Gastrocnemius medialis (tissue), 4 donors: ENCODE measurements at regions of chr1 and their contacts with region 1.

Region 1: DNA sequence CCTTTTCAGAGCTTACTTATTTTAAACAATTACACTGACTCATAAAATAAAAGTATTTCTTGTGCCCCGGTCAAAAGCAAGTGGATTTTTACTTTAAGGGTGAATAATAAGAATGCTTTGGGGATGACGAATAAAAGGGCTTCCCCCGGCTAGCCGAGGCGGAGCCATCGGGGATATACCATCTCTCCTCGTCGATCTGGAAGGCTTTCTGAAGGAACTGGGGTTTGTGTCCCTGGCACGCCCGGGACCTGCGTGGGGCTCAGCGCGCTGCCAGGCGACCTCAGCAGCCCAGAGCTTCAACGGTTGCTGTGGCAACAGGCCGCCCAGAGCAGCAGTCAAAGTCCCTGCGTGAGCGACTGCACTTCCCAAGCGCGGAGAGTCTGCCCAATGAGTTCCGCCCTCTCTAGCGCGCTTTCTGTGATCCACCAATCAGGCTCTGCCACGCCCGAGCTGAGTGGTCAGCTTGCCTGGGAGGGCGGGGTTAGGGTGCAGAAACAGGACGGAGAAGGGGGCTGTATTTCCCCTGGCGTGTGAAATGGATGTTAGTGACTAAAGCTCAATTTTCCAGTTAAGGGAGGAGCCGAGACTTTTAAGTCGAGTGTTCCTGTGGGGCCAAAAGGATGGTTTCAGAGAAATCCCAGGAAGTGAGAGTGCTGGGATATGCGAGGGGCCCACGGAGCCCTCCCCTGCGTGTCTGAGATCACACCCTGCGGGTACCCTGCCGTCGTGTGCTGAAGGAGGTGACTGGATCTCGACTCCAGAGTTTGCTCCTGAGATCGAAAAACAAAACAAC is 33.0 kb upstream of the MGST3 start:
- DNase-seq: peak; percentile 92 to 95
- ATAC-seq: peak; percentile 94 to 98
- H3K4me3 ChIP-seq: peak overlapping the region; percentile 57 to 72 (median 64)
- H3K27ac ChIP-seq: peak overlapping the region; percentile 20 to 71 (median 54)
- H3K4me1 ChIP-seq: peaks cover 12 to 14% of the 10 kb centered on the region in 2 donors
- H3K27me3 ChIP-seq: no peaks in the 10 kb centered on the region
- CTCF ChIP-seq: no peak
- POLR2A ChIP-seq: no peak

Region 2: GRCh38 chr1:165355977-165356811 is 241.9 kb before region 1 on chr1 and contains the start of gene LMX1A:
- in situ Hi-C with region 1: no loop called
- intact Hi-C with region 1: no loop called
- DNase-seq: peak in 1 of 2 donors; percentile 36
- ATAC-seq: peak; percentile 41 to 44
- H3K4me3 ChIP-seq: peak within 1 kb of the TSS; percentile 52 to 62 (median 56)
- H3K27ac ChIP-seq: peak within 1 kb of the TSS in 1 of 4 donors; percentile 34
- H3K4me1 ChIP-seq: peaks cover 0 to 14% of the 10 kb centered on the region in 2 donors
- H3K27me3 ChIP-seq: peaks cover 42 to 56% (median 47%) of the 10 kb centered on the region in 3 donors
- CTCF ChIP-seq: no peak
- POLR2A ChIP-seq: no peak
- total RNA-seq, gene LMX1A: 0.20 TPM in 1 of 4 donors, not detected in the others

Region 3: DNA sequence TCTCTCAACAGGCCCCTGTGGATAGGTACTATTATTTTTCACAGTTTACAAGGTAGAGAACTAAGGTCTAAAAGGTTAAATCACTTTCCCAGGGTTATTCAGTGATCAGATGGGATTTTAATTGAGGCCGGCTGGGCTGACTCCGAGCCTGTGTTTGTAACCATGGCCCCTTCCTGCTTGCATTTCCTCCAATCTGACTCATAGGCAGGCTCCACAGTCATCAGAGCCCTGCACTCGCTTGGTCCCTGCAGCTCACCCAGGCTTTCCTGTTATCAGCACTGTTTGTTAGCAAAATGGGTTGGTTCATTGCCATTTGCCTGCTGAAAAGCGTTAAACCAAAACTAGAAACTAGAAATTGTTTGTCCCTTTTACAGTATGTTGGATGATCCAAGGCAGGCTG is 200.1 kb before region 1 on chr1:
- in situ Hi-C with region 1: loop called in 3 of 4 experiments (anchors 5 kb)
- intact Hi-C with region 1: loop called (anchors 1 kb)
- DNase-seq: no peak
- ATAC-seq: peak; percentile 37 to 49
- H3K4me3 ChIP-seq: no peak overlapping the region
- H3K27ac ChIP-seq: peak overlapping the region; percentile 16 to 54 (median 38)
- H3K4me1 ChIP-seq: peaks cover 6% of the 10 kb centered on the region in 2 donors
- H3K27me3 ChIP-seq: no peaks in the 10 kb centered on the region
- CTCF ChIP-seq: no peak
- POLR2A ChIP-seq: no peak

Region 4: GRCh38 chr1:165531021-165531420 is 67.1 kb before region 1 on chr1:
- in situ Hi-C with region 1: no loop called
- intact Hi-C with region 1: no loop called
- DNase-seq: peak; percentile 51 to 62
- ATAC-seq: peak; percentile 97
- H3K4me3 ChIP-seq: no peak overlapping the region
- H3K27ac ChIP-seq: peak overlapping the region; percentile 36 to 77 (median 60)
- H3K4me1 ChIP-seq: peaks cover 39 to 45% of the 10 kb centered on the region in 2 donors
- H3K27me3 ChIP-seq: no peaks in the 10 kb centered on the region
- CTCF ChIP-seq: no peak
- POLR2A ChIP-seq: no peak

Region 5: GRCh38 chr1:165630629-165631341 is 32.7 kb after region 1 on chr1 and contains the start of gene MGST3:
- in situ Hi-C with region 1: no loop called
- intact Hi-C with region 1: loop called (anchors 1 kb)
- DNase-seq: peak; percentile 90 to 95
- ATAC-seq: peak; percentile 81
- H3K4me3 ChIP-seq: peak within 1 kb of the TSS; percentile 64 to 95 (median 76)
- H3K27ac ChIP-seq: peak within 1 kb of the TSS; percentile 91 to 100 (median 94)
- H3K4me1 ChIP-seq: peaks cover 39 to 42% of the 10 kb centered on the region in 2 donors
- H3K27me3 ChIP-seq: no peaks in the 10 kb centered on the region
- CTCF ChIP-seq: no peak
- POLR2A ChIP-seq: peak; percentile 96
- total RNA-seq, gene MGST3: 101 to 275 (median 202) TPM

Region 6: GRCh38 chr1:165726169-165726568 is 128.1 kb after region 1 on chr1:
- in situ Hi-C with region 1: no loop called
- intact Hi-C with region 1: no loop called
- DNase-seq: no peak
- ATAC-seq: no peak
- H3K4me3 ChIP-seq: no peak overlapping the region
- H3K27ac ChIP-seq: no peak overlapping the region
- H3K4me1 ChIP-seq: peaks cover 0 to 4% of the 10 kb centered on the region in 2 donors
- H3K27me3 ChIP-seq: no peaks in the 10 kb centered on the region
- CTCF ChIP-seq: no peak
- POLR2A ChIP-seq: no peak

Region 7: DNA sequence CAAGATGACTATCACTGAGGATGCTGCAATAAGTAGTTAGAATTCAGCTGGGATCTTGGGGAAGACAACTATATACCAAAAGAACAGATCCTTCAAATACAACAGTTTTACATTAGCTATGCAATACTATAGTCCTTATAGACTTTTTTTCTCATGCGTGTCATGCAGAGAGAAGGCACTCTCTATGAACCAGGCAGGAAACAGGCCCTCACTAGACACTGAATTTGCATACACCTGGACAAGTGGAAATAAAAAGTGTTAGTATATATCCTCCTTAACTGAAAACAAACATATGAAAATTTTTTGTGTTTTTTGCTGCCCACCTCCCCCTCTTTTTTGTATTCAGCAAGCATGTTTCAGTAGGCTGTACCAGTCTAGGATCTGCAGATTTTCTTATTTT is 140.7 kb after region 1 on chr1:
- in situ Hi-C with region 1: no loop called
- intact Hi-C with region 1: loop called (anchors 1 kb)
- DNase-seq: no peak
- ATAC-seq: no peak
- H3K4me3 ChIP-seq: no peak overlapping the region
- H3K27ac ChIP-seq: peak overlapping the region in 2 of 4 donors; percentile 55 to 73
- H3K4me1 ChIP-seq: peaks cover 20 to 21% of the 10 kb centered on the region in 2 donors
- H3K27me3 ChIP-seq: no peaks in the 10 kb centered on the region
- CTCF ChIP-seq: no peak
- POLR2A ChIP-seq: no peak

Region 8: DNA sequence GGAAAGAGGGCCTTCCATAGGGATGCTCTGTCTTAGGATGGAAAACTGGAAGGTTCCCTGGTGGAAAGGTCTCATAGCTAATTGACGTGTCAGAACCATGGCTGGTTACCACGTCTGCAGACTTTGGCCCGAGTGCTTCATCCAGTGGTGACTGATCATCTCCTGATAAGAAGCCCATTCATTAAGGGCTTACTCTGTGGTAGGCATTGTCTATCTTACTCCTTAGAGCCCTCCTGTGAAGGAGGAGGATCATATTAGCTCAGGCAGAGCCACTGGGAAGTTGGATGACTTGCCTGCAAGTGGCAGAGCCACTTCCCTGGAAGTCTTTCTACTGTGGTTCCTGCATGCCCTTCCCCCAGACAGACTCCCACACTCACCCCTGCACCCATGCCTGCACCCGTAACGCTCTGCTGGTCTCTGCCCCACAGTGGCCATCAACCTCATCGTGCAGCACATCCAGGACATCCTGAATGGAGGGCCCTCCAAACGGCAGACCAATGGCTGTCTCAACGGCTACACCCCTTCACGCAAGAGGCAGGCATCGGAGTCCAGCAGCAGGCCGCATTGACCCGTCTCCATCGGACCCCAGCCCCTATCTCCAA is 309.3 kb after region 1 on chr1:
- in situ Hi-C with region 1: loop called in 3 of 4 experiments (anchors 5 kb)
- intact Hi-C with region 1: no loop called
- DNase-seq: no peak
- ATAC-seq: no peak
- H3K4me3 ChIP-seq: no peak overlapping the region
- H3K27ac ChIP-seq: no peak overlapping the region
- H3K4me1 ChIP-seq: peaks cover 7 to 10% of the 10 kb centered on the region in 2 donors
- H3K27me3 ChIP-seq: no peaks in the 10 kb centered on the region
- CTCF ChIP-seq: no peak
- POLR2A ChIP-seq: no peak